Calu3 (cell line): ENCODE measurements at regions of chr7 and their contacts with region 1.

Region 1: GRCh38 chr7:116354546-116355408 is 144.4 kb downstream of the TES start:
- DNase-seq: peak; percentile 84
- H3K4me3 Mint-ChIP-seq: peak overlapping the region; percentile 69
- H3K27ac Mint-ChIP-seq: peak overlapping the region; percentile 98
- H3K4me1 Mint-ChIP-seq: peaks cover 56% of the 10 kb centered on the region
- H3K27me3 Mint-ChIP-seq: no peaks in the 10 kb centered on the region
- CTCF ChIP-seq: no peak

Region 2: GRCh38 chr7:116271963-116272839 is 82.6 kb before region 1 on chr7:
- CTCF ChIA-PET with region 1: no interaction called
- intact Hi-C with region 1: loop called (anchors 5 kb)
- DNase-seq: peak; percentile 62
- H3K4me3 Mint-ChIP-seq: peak overlapping the region; percentile 23
- H3K27ac Mint-ChIP-seq: peak overlapping the region; percentile 68
- H3K4me1 Mint-ChIP-seq: peaks cover 52% of the 10 kb centered on the region
- H3K27me3 Mint-ChIP-seq: no peaks in the 10 kb centered on the region
- CTCF ChIP-seq: no peak

Region 3: GRCh38 chr7:116340943-116341907 is 13.6 kb before region 1 on chr7:
- CTCF ChIA-PET with region 1: no interaction called
- intact Hi-C with region 1: no loop called
- DNase-seq: no peak
- H3K4me3 Mint-ChIP-seq: no peak overlapping the region
- H3K27ac Mint-ChIP-seq: no peak overlapping the region
- H3K4me1 Mint-ChIP-seq: peaks cover 30% of the 10 kb centered on the region
- H3K27me3 Mint-ChIP-seq: no peaks in the 10 kb centered on the region
- CTCF ChIP-seq: no peak

Region 4: GRCh38 chr7:116380025-116380424 is 25.2 kb after region 1 on chr7:
- CTCF ChIA-PET with region 1: no interaction called
- intact Hi-C with region 1: no loop called
- DNase-seq: no peak
- H3K4me3 Mint-ChIP-seq: no peak overlapping the region
- H3K27ac Mint-ChIP-seq: no peak overlapping the region
- H3K4me1 Mint-ChIP-seq: peaks cover 16% of the 10 kb centered on the region
- H3K27me3 Mint-ChIP-seq: no peaks in the 10 kb centered on the region
- CTCF ChIP-seq: no peak

Region 5: GRCh38 chr7:116423499-116423898 is 68.7 kb after region 1 on chr7:
- CTCF ChIA-PET with region 1: no interaction called
- intact Hi-C with region 1: loop called (anchors 5 kb)
- DNase-seq: no peak
- H3K4me3 Mint-ChIP-seq: peak overlapping the region; percentile 19
- H3K27ac Mint-ChIP-seq: peak overlapping the region; percentile 48
- H3K4me1 Mint-ChIP-seq: peaks cover 58% of the 10 kb centered on the region
- H3K27me3 Mint-ChIP-seq: no peaks in the 10 kb centered on the region
- CTCF ChIP-seq: no peak

Region 6: DNA sequence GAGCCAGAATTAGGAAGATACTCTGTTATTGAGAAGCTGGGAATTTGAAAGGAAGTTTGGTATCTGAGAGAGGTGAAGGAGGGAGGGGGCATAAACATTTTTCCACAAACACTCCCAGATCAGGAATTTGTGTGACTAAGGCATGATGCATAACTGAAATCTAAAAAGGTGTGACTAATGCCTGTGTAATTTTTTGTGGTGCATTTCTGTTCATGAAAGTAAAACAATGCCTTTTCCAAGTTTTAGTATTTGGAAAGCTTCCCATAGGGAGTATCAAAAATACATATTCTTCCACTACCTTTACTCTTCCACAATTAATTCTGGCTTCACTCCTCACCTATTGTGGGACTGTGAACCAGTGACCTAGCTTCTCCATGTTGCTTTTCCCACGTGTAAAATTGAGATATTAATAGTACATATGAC is 88.3 kb after region 1 on chr7:
- CTCF ChIA-PET with region 1: no interaction called
- intact Hi-C with region 1: loop called (anchors 5 kb)
- DNase-seq: peak; percentile 36
- H3K4me3 Mint-ChIP-seq: no peak overlapping the region
- H3K27ac Mint-ChIP-seq: peak overlapping the region; percentile 71
- H3K4me1 Mint-ChIP-seq: peaks cover 65% of the 10 kb centered on the region
- H3K27me3 Mint-ChIP-seq: no peaks in the 10 kb centered on the region
- CTCF ChIP-seq: no peak